Testis (tissue), 5 donors: ENCODE measurements at regions of chr1 and their contacts with region 1.

Region 1: GRCh38 chr1:15835741-15836510 is 11.6 kb upstream of the SPEN start:
- DNase-seq: peak; percentile 99
- H3K4me3 ChIP-seq: peak overlapping the region; percentile 84 to 89
- H3K27ac ChIP-seq: peak overlapping the region; percentile 100
- H3K4me1 ChIP-seq: peaks cover 7% of the 10 kb centered on the region
- H3K27me3 ChIP-seq: no peaks in the 10 kb centered on the region
- CTCF ChIP-seq: no peak
- POLR2A ChIP-seq: peak; percentile 11

Region 2: GRCh38 chr1:15885701-15886610 is 50.0 kb after region 1 on chr1:
- intact Hi-C with region 1: loop called (anchors 10 kb)
- DNase-seq: peak; percentile 95
- H3K4me3 ChIP-seq: peak overlapping the region in 1 of 2 donors; percentile 12
- H3K27ac ChIP-seq: peak overlapping the region; percentile 51 to 87
- H3K4me1 ChIP-seq: no peaks in the 10 kb centered on the region
- H3K27me3 ChIP-seq: no peaks in the 10 kb centered on the region
- CTCF ChIP-seq: no peak
- POLR2A ChIP-seq: no peak

Region 3: DNA sequence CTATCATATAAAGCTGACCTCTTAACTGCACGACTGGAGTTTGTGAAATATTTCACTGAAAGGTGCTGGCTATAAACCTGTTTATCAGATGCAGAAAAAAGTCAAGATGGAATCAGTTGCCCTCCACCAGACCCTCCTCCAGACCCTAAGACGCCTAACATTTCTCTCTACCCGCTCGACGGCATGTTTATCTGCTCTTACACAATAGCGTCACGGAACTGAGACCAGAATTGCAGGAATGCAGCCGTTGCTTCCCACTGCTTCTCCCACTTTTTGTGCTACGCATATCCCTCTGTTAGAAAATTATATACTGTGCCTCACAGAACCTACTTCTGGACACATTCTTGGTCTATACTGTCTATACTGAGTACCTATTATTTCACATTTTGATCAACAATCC is 265.7 kb after region 1 on chr1:
- intact Hi-C with region 1: no loop called
- DNase-seq: no peak
- H3K4me3 ChIP-seq: no peak overlapping the region
- H3K27ac ChIP-seq: no peak overlapping the region
- H3K4me1 ChIP-seq: no peaks in the 10 kb centered on the region
- H3K27me3 ChIP-seq: no peaks in the 10 kb centered on the region
- CTCF ChIP-seq: no peak
- POLR2A ChIP-seq: no peak